Activated CD8-positive, alpha-beta T cell treated with anti-CD3 and anti-CD28 coated beads for 36 hours (primary cell): ENCODE measurements at regions of chr16 and their contacts with region 1.

Region 1: DNA sequence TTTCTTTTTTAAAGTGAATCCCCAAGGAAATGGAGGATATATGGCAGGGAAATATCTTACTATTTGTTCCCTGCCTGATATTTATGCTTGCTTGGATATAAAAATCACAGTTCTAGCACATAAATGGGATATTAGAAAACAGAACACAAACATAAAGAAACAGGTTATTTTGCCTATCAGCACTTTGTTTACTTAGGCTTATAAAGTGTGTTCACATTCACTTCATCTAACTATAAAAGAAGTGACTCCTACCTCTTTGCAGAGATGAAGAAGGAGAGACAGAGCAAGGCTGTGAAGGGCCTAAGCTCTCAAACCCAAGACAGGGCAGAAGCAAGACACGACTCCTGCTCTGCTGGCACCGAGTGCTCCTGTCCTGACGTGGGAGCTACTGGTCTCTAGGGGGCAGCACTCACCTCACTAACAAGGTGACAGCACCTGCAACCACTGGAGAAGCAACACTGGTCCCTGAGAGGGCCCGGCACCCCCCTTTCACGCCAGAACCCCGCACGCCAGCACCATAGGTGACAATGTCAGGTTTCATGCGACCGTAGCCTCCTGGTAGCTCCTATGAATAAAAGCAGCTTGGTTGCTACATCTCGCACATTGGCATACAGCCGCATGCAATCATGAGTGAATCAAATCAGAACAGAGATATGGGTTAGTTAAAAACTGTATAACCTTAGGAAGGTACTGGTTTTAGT is 32.0 kb downstream of the MBTPS1 start:
- DNase-seq: peak; percentile 87
- ATAC-seq: peak; percentile 87
- H3K4me3 Mint-ChIP-seq: no peak overlapping the region
- H3K27ac Mint-ChIP-seq: no peak overlapping the region
- H3K4me1 Mint-ChIP-seq: peaks cover 43% of the 10 kb centered on the region
- H3K27me3 Mint-ChIP-seq: no peaks in the 10 kb centered on the region
- CTCF ChIP-seq: peak; percentile 89

Region 2: GRCh38 chr16:83903751-83904150 is 181.0 kb before region 1 on chr16:
- CTCF ChIA-PET with region 1: no interaction called
- POLR2A ChIA-PET with region 1: no interaction called
- intact Hi-C with region 1: no loop called
- DNase-seq: no peak
- ATAC-seq: no peak
- H3K4me3 Mint-ChIP-seq: no peak overlapping the region
- H3K27ac Mint-ChIP-seq: no peak overlapping the region
- H3K4me1 Mint-ChIP-seq: peaks cover 22% of the 10 kb centered on the region
- H3K27me3 Mint-ChIP-seq: no peaks in the 10 kb centered on the region
- CTCF ChIP-seq: no peak

Region 3: GRCh38 chr16:83989285-83989684 is 95.4 kb before region 1 on chr16:
- CTCF ChIA-PET with region 1: no interaction called
- POLR2A ChIA-PET with region 1: no interaction called
- intact Hi-C with region 1: no loop called
- DNase-seq: no peak
- ATAC-seq: no peak
- H3K4me3 Mint-ChIP-seq: no peak overlapping the region
- H3K27ac Mint-ChIP-seq: no peak overlapping the region
- H3K4me1 Mint-ChIP-seq: no peaks in the 10 kb centered on the region
- H3K27me3 Mint-ChIP-seq: peaks cover 15% of the 10 kb centered on the region
- CTCF ChIP-seq: no peak

Region 4: DNA sequence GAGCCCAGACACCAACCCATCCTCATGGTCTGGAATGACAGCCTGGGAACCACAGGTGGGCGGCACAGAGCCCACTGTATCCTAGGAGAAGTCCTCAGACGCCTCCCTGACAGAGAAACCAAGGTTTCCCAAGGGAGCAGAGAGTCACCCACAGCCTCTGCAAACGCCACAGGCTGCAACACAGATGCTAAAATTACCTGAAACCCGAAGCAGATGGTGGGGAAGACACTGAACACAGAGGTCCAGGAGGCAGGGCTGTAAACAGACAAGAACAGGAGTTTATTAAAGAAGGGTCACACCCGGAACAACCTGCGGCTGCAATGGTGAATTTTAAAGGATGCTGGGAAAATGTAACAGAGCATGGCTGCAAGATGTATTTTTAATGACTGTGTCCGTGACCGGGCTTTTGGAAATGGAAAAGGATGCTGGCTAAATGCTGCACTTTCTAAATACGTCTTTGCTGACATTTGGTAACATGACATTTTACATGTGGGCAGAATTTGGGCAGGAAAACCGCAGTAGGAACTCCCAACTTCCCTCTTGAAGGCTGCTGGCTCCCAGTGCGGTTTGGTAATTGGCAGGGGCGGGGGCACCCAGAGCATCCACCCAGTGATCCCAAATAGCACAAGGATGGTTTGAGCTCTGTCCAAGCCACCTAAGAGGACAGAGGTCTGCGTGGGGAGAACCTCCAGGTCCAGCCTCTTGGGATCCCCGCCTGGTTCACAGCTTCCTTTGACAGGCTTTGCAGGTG is 55.2 kb before region 1 on chr16:
- CTCF ChIA-PET with region 1: no interaction called
- POLR2A ChIA-PET with region 1: no interaction called
- intact Hi-C with region 1: no loop called
- DNase-seq: peak; percentile 28
- ATAC-seq: peak; percentile 55
- H3K4me3 Mint-ChIP-seq: no peak overlapping the region
- H3K27ac Mint-ChIP-seq: peak overlapping the region; percentile 45
- H3K4me1 Mint-ChIP-seq: peaks cover 15% of the 10 kb centered on the region
- H3K27me3 Mint-ChIP-seq: peaks cover 24% of the 10 kb centered on the region
- CTCF ChIP-seq: no peak

Region 5: GRCh38 chr16:84062734-84063640 is 21.7 kb before region 1 on chr16:
- CTCF ChIA-PET with region 1: interaction called, 124 read pairs
- POLR2A ChIA-PET with region 1: interaction called, 4 read pairs
- intact Hi-C with region 1: no loop called
- DNase-seq: peak; percentile 82
- ATAC-seq: peak; percentile 92
- H3K4me3 Mint-ChIP-seq: no peak overlapping the region
- H3K27ac Mint-ChIP-seq: peak overlapping the region; percentile 64
- H3K4me1 Mint-ChIP-seq: peaks cover 8% of the 10 kb centered on the region
- H3K27me3 Mint-ChIP-seq: no peaks in the 10 kb centered on the region
- CTCF ChIP-seq: peak; percentile 88

Region 6: GRCh38 chr16:84116720-84117493 is 32.2 kb after region 1 on chr16 and contains the start of gene MBTPS1:
- CTCF ChIA-PET with region 1: interaction called, 40 read pairs
- POLR2A ChIA-PET with region 1: interaction called, 5 read pairs
- intact Hi-C with region 1: no loop called
- DNase-seq: peak; percentile 98
- ATAC-seq: peak; percentile 92
- H3K4me3 Mint-ChIP-seq: peak within 1 kb of the TSS; percentile 94
- H3K27ac Mint-ChIP-seq: peak within 1 kb of the TSS; percentile 95
- H3K4me1 Mint-ChIP-seq: peaks cover 26% of the 10 kb centered on the region
- H3K27me3 Mint-ChIP-seq: no peaks in the 10 kb centered on the region
- CTCF ChIP-seq: peak; percentile 4
- total RNA-seq, gene MBTPS1: 31.5 to 31.7 TPM

Region 7: GRCh38 chr16:84144859-84145639 is 60.3 kb after region 1 on chr16 and contains the starts of genes DNAAF1 and HSDL1:
- CTCF ChIA-PET with region 1: interaction called, 34 read pairs
- POLR2A ChIA-PET with region 1: no interaction called
- intact Hi-C with region 1: loop called (anchors 5 kb)
- DNase-seq: peak; percentile 92
- ATAC-seq: peak; percentile 85
- H3K4me3 Mint-ChIP-seq: peak within 1 kb of the TSS; percentile 93
- H3K27ac Mint-ChIP-seq: peak within 1 kb of the TSS; percentile 82
- H3K4me1 Mint-ChIP-seq: peaks cover 22% of the 10 kb centered on the region
- H3K27me3 Mint-ChIP-seq: no peaks in the 10 kb centered on the region
- CTCF ChIP-seq: no peak
- total RNA-seq, gene DNAAF1: not detected
- total RNA-seq, gene HSDL1: 11.1 to 11.8 TPM

Region 8: DNA sequence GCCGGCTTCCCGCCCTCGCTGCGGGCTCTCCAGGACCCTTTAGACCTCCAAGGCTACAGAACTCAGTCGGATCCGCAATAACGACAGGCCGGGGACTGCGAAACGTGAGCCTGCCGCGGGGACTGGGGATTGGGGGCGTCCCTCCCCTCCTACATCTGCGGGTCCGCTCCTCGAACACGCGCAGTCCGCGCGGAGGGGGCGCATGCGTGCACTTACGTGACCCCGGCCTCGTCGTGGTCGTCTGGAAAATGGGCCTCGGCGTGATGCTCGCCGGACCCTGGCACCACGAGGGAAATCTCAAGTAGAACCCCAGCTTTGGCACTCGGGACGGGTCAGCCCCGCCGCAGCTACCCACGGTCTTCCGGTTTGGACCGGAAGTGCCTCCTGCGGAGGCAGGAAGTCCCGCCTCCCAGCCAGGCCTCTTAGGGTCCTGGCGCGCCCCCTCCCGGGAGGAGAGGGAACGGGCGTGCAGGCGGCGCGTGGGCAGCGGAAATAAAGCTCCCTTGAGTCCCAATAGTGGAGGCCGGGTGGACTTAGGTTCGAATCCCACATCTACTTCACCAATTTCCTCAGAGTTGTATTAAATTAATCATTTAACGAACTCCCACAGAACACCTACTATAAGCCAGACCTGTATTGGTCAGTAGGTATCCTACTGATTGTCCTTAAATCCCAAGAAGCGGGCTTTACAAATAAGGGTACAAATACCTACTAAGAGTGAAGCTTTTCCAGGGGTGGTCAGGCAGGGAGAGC is 102.1 kb after region 1 on chr16 and contains the start of gene TAF1C:
- CTCF ChIA-PET with region 1: interaction called, 102 read pairs
- POLR2A ChIA-PET with region 1: interaction called, 4 read pairs
- intact Hi-C with region 1: loop called (anchors 5 kb)
- DNase-seq: peak; percentile 97
- ATAC-seq: peak; percentile 98
- H3K4me3 Mint-ChIP-seq: peak within 1 kb of the TSS; percentile 94
- H3K27ac Mint-ChIP-seq: peak within 1 kb of the TSS; percentile 95
- H3K4me1 Mint-ChIP-seq: peaks cover 14% of the 10 kb centered on the region
- H3K27me3 Mint-ChIP-seq: no peaks in the 10 kb centered on the region
- CTCF ChIP-seq: peak; percentile 86
- total RNA-seq, gene TAF1C: 59.3 to 62.6 TPM

Region 9: GRCh38 chr16:84214451-84215066 is 129.8 kb after region 1 on chr16:
- CTCF ChIA-PET with region 1: no interaction called
- POLR2A ChIA-PET with region 1: no interaction called
- intact Hi-C with region 1: no loop called
- DNase-seq: no peak
- ATAC-seq: no peak
- H3K4me3 Mint-ChIP-seq: no peak overlapping the region
- H3K27ac Mint-ChIP-seq: no peak overlapping the region
- H3K4me1 Mint-ChIP-seq: peaks cover 2% of the 10 kb centered on the region
- H3K27me3 Mint-ChIP-seq: no peaks in the 10 kb centered on the region
- CTCF ChIP-seq: no peak